Heart left ventricle (tissue), 16 donors: ENCODE measurements at regions of chr13 and their contacts with region 1.

Region 1: DNA sequence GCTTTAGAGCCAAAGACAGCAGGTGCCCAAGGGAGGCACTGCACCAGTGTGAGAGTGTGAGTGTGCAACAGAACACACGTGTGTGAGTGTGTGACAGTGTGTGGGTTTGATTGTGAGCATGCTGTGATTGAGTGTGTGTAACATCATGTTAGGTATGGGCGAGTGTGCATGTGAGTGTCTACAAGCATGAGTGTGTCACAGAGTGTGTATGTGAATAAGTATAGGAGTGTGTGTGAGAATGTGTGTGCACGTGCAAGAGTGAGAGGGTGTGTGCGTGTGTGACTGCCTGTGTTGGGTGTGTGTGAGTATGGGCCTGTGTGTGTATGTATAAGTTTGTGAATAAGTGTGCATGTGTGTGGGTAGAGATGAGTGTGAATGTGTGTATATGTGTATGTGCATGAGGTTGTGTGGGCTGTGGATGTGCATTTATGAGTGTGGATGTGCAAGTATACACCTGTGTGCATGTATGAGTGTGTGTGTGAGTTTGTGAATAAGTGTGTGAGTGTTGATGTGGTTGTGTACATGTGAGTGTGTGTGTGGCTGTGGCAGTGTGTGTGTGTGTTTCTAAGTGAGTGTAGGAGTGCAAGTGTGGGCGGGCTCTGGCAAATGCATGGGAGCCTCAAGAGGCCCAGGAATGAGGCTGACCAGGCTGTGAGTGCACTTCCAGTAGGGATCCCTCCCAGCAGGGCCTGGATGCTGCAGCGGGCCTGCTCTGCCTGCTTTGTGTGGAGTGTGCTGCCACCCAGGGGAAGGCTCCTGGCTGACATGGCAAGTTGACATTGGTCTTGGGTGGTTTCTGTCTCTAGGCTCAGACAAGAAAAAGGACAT is 198.4 kb downstream of the COL4A1 start:
- DNase-seq: peak; percentile 78 to 88 (median 87)
- ATAC-seq: peak; percentile 87 to 92 (median 90)
- H3K4me3 ChIP-seq: no peak overlapping the region
- H3K27ac ChIP-seq: peak overlapping the region in 11 of 12 donors; percentile 57 to 81 (median 71)
- H3K4me1 ChIP-seq: peaks cover 3 to 38% (median 13%) of the 10 kb centered on the region in 12 donors
- H3K27me3 ChIP-seq: no peaks in the 10 kb centered on the region
- CTCF ChIP-seq: peak; percentile 31 to 80 (median 68)
- POLR2A ChIP-seq: no peak

Region 2: GRCh38 chr13:108961542-108962125 is 1146.9 kb before region 1 on chr13:
- intact Hi-C with region 1: loop called in 8 of 10 experiments (anchors 2 to 10 kb)
- DNase-seq: no peak
- ATAC-seq: peak; percentile 41 to 85 (median 82)
- H3K4me3 ChIP-seq: no peak overlapping the region
- H3K27ac ChIP-seq: peak overlapping the region in 1 of 12 donors; percentile 5
- H3K4me1 ChIP-seq: peaks cover 0 to 6% (median 0%) of the 10 kb centered on the region in 12 donors
- H3K27me3 ChIP-seq: no peaks in the 10 kb centered on the region
- CTCF ChIP-seq: peak; percentile 81 to 92 (median 86)
- POLR2A ChIP-seq: no peak

Region 3: DNA sequence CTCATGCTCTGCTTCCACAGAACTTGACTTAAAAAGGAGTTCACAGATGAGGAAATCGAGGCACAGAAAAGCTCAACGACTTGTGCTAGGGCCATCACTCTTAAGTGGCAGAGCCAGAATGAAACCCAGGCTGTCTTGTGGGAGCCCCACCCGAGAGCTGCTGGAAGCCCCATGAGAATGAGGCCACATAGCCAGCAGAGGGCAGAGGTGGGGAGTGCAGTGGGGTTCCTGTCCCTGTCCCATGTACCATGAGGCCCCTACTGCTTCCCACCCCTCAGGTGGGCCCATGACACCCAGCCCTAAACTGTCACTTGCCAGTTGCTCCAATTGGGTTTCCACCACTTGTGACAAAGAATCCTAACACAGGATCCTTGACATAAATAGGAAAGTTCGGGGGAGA is 498.0 kb before region 1 on chr13:
- intact Hi-C with region 1: loop called in 1 of 10 experiments (anchors 5 kb)
- DNase-seq: peak in 4 of 5 donors; percentile 31 to 70 (median 43)
- ATAC-seq: peak; percentile 61 to 79 (median 72)
- H3K4me3 ChIP-seq: no peak overlapping the region
- H3K27ac ChIP-seq: no peak overlapping the region
- H3K4me1 ChIP-seq: no peaks in the 10 kb centered on the region
- H3K27me3 ChIP-seq: peaks cover 0 to 4% (median 0%) of the 10 kb centered on the region in 9 donors
- CTCF ChIP-seq: peak in 11 of 12 donors; percentile 15 to 53 (median 35)
- POLR2A ChIP-seq: no peak

Region 4: GRCh38 chr13:109869312-109870237 is 239.0 kb before region 1 on chr13:
- intact Hi-C with region 1: loop called in 5 of 10 experiments (anchors 2 to 10 kb)
- DNase-seq: peak; percentile 73 to 91 (median 90)
- ATAC-seq: peak; percentile 79 to 93 (median 88)
- H3K4me3 ChIP-seq: peak overlapping the region in 11 of 12 donors; percentile 13 to 56 (median 42)
- H3K27ac ChIP-seq: peak overlapping the region; percentile 22 to 79 (median 68)
- H3K4me1 ChIP-seq: peaks cover 0 to 30% (median 13%) of the 10 kb centered on the region in 12 donors
- H3K27me3 ChIP-seq: no peaks in the 10 kb centered on the region
- CTCF ChIP-seq: peak in 6 of 12 donors; percentile 13 to 55 (median 34)
- POLR2A ChIP-seq: no peak

Region 5: DNA sequence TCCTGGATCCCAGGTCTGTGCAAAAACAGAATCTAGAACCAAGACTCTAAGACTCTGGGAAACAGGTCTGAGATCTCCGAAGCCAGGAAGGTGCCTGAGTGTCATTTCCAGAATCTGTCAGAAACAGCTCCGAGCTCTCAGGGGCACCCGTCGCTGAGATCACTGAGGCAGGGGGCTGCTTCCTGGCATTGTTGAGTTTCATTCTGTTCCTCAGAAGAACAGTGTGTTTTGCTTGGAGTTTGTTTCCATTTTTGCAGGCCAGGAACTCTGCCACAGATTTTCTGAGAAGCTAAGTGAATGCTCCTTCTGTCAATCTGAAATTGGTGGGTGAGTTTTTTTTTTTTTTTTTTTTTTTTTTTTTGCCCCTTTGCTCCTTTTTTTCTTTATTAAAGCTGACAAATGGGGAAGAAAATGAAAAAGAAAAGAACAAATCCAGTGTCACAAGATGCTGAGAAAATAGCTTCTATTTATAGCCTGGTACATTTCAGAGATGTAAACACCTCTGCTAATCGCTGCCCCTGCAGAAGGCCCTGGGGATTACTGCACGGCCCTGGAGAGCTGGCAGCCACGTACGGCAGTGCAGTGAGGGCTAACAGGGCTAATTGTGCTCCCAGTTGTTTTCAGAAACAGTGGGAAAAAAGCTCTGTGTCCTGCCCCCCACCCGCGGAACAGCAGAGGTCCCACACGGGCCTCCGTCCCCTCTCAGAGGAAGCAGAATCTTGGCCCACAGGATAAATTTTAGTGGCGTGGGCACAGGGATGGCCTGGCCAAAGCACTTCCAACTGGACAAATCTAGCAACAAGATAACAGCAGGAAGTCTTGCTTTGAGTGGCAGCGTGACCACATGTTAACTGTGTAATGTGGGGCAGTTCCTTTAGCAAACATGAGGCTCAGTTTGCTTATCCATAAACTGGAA is 84.6 kb before region 1 on chr13:
- intact Hi-C with region 1: loop called in 1 of 10 experiments (anchors 5 kb)
- DNase-seq: peak in 4 of 5 donors; percentile 36 to 64 (median 50)
- ATAC-seq: peak; percentile 95 to 98 (median 98)
- H3K4me3 ChIP-seq: no peak overlapping the region
- H3K27ac ChIP-seq: peak overlapping the region; percentile 39 to 87 (median 72)
- H3K4me1 ChIP-seq: peaks cover 0 to 19% (median 8%) of the 10 kb centered on the region in 12 donors
- H3K27me3 ChIP-seq: no peaks in the 10 kb centered on the region
- CTCF ChIP-seq: no peak
- POLR2A ChIP-seq: no peak

Region 6: DNA sequence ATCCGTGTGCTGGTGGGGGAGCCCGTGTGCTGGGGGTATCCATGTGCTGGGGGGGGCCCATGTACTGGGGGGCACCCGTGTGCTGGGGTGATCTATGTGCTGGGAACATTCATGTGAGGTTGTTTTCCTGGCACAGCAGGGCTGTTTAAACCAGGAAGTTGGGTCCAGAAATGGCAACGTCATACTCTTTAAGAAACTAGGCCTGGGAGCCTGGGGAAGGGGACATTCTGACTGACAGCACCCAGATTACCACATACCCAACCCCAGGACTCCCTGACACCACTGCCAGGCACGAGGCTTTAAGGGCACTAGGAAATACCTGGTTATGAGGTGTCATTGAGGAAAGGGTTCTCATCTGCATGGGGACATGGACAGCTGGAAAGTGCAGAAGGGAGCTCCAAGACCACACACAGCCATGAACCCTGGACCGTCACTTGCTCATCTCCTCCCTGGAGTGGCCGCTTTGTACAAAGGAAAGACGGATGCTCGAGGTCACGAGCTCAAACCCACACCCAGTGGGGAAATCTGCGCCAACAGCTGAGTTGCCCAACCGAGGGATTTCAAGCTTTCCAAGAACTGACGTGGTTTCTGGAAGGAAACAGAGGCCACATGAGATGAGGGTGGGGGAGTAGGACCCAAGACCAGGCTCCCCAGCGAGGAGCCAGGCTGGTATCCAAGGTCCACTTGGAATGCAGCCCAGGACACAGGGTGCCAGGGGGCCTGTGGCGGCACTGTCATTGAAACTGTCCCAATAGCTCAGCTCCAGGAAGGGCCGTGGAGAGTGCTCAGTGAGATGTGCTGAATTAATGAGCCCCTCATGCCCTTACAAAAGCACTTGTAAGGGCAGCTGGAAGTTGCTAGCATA is 412.1 kb after region 1 on chr13:
- intact Hi-C with region 1: no loop called
- DNase-seq: peak; percentile 75 to 90 (median 83)
- ATAC-seq: peak; percentile 63 to 72 (median 70)
- H3K4me3 ChIP-seq: no peak overlapping the region
- H3K27ac ChIP-seq: peak overlapping the region; percentile 46 to 92 (median 76)
- H3K4me1 ChIP-seq: peaks cover 0 to 74% (median 39%) of the 10 kb centered on the region in 12 donors
- H3K27me3 ChIP-seq: no peaks in the 10 kb centered on the region
- CTCF ChIP-seq: no peak
- POLR2A ChIP-seq: no peak